Activated CD4-positive, alpha-beta T cell treated with anti-CD3 and anti-CD28 coated beads for 36 hours (primary cell): ENCODE measurements at regions of chr6 and their contacts with region 1.

Region 1: DNA sequence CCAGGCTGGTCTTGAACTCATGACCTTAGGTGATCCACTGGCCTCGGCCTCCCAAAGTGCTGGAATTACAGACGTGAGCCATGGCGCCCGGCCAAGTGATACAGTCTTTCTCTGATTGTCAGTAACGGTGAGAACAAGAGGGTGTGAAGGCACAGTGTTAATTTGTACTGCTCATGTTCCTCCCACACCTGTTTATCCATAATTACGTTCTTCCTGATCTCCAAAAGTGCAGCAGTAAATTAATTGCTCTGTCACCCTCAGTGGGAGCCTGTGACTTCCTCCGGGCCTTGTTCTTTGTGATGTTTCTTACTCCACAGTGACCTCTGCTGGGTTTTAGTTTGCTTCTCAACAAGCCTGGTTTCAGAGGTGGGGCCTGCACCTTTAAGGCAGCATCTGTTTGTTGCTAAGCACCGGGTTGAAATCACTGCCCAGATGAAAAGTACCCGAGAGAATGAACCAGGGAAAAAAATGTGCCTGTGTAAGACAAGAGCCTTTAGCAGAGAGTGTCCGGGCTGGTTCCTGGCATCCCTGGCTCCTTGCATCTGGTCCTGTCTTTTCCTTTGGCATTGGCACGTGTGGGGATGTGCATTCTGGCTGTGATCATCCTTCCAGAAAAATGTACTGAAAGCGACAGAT is 89.1 kb upstream of the CLDN20 start:
- DNase-seq: peak; percentile 77
- ATAC-seq: peak; percentile 58
- H3K4me3 Mint-ChIP-seq: no peak overlapping the region
- H3K27ac Mint-ChIP-seq: peak overlapping the region; percentile 73
- H3K4me1 Mint-ChIP-seq: peaks cover 50% of the 10 kb centered on the region
- H3K27me3 Mint-ChIP-seq: no peaks in the 10 kb centered on the region

Region 2: GRCh38 chr6:154675602-154676088 is 499.0 kb before region 1 on chr6:
- CTCF ChIA-PET with region 1: interaction called, 4 read pairs
- POLR2A ChIA-PET with region 1: no interaction called
- intact Hi-C with region 1: loop called (anchors 1 kb)
- DNase-seq: peak; percentile 91
- ATAC-seq: peak; percentile 100
- H3K4me3 Mint-ChIP-seq: no peak overlapping the region
- H3K27ac Mint-ChIP-seq: no peak overlapping the region
- H3K4me1 Mint-ChIP-seq: no peaks in the 10 kb centered on the region
- H3K27me3 Mint-ChIP-seq: no peaks in the 10 kb centered on the region

Region 3: DNA sequence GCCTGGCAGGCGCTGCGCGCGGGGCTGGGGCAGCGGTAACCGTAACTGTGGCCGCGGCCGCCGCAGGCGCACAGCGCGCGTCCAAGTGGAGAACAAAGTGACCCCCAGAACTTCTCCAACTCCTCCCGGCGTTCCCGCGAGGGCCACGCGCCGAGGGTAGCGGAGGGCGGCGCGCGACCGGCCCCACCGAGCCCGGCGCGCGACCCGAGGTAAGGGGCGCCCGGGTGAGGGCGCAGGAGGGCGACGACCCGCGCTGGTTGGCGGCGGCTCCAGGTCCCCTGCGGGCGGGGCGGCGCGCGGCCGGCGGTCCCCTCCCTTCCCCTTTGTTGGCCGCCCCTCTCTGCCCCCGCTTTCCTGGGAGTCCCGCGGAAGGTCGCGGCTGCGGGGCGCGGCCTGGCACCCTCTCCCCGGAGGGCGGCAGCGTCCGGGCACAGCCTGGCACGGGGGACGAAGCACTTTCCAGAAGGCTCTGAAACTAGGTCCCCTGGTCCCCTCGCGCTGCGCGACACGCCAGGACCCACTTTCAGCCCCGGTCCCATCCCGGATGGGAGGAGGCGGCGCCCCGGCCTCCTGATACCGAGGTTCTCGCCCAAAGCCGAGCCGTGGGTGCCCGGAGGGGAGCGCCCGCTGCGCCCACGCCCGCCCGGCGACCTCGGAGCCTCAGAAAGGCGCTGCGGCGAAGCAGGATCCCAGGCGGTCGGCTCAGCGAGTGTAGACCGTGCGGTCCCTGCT is 179.2 kb before region 1 on chr6 and contains the start of gene TIAM2:
- CTCF ChIA-PET with region 1: no interaction called
- POLR2A ChIA-PET with region 1: no interaction called
- intact Hi-C with region 1: loop called (anchors 1 kb)
- DNase-seq: peak; percentile 59
- ATAC-seq: peak; percentile 71
- H3K4me3 Mint-ChIP-seq: peak within 1 kb of the TSS; percentile 65
- H3K27ac Mint-ChIP-seq: no peak within 1 kb of the TSS
- H3K4me1 Mint-ChIP-seq: peaks cover 11% of the 10 kb centered on the region
- H3K27me3 Mint-ChIP-seq: peaks cover 36% of the 10 kb centered on the region
- total RNA-seq, gene TIAM2: 10.4 to 12.0 TPM

Region 4: GRCh38 chr6:155154158-155154830 is 20.4 kb before region 1 on chr6:
- CTCF ChIA-PET with region 1: interaction called, 26 read pairs
- POLR2A ChIA-PET with region 1: interaction called, 32 read pairs
- intact Hi-C with region 1: loop called (anchors 1 kb)
- DNase-seq: peak; percentile 62
- ATAC-seq: peak; percentile 61
- H3K4me3 Mint-ChIP-seq: peak overlapping the region; percentile 35
- H3K27ac Mint-ChIP-seq: peak overlapping the region; percentile 91
- H3K4me1 Mint-ChIP-seq: peaks cover 78% of the 10 kb centered on the region
- H3K27me3 Mint-ChIP-seq: peaks cover 3% of the 10 kb centered on the region

Region 5: GRCh38 chr6:155264693-155265320 is 90.1 kb after region 1 on chr6:
- CTCF ChIA-PET with region 1: interaction called, 11 read pairs
- POLR2A ChIA-PET with region 1: no interaction called
- intact Hi-C with region 1: loop called (anchors 1 to 5 kb)
- DNase-seq: no peak
- ATAC-seq: peak; percentile 19
- H3K4me3 Mint-ChIP-seq: no peak overlapping the region
- H3K27ac Mint-ChIP-seq: peak overlapping the region; percentile 15
- H3K4me1 Mint-ChIP-seq: peaks cover 22% of the 10 kb centered on the region
- H3K27me3 Mint-ChIP-seq: no peaks in the 10 kb centered on the region

Region 6: GRCh38 chr6:155530219-155530834 is 355.6 kb after region 1 on chr6:
- CTCF ChIA-PET with region 1: no interaction called
- POLR2A ChIA-PET with region 1: no interaction called
- intact Hi-C with region 1: loop called in 1 of 2 experiments (anchors 5 kb)
- DNase-seq: peak; percentile 29
- ATAC-seq: peak; percentile 73
- H3K4me3 Mint-ChIP-seq: no peak overlapping the region
- H3K27ac Mint-ChIP-seq: no peak overlapping the region
- H3K4me1 Mint-ChIP-seq: peaks cover 16% of the 10 kb centered on the region
- H3K27me3 Mint-ChIP-seq: no peaks in the 10 kb centered on the region

Region 7: DNA sequence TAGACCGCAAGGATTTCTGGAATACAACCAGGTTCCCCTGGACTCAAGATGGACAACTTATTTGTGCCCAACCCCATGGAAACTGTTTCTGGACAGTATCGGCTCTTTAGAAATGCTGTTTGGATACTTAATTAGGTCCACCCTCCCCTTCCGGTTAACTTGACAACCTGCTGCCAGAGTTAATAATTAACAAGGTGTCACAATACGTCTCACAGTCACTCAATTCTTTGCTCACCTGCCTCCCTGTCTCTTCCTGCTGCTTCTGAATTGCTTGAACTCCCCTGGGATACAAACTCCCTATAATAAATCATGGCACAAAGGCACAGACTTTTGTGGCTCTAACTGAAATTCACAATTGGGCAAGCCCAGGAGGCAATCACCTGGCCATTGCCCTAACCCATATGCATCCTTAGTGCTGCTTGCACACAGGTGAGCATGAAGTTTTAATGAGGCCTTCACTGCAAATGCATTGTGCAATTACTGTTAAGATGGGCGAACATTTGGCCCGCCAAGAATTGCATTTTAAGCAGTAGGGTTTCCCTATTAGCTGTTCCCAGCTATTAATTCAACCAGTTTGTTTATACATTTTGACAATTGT is 785.3 kb after region 1 on chr6:
- CTCF ChIA-PET with region 1: no interaction called
- POLR2A ChIA-PET with region 1: no interaction called
- intact Hi-C with region 1: no loop called
- DNase-seq: no peak
- ATAC-seq: no peak
- H3K4me3 Mint-ChIP-seq: no peak overlapping the region
- H3K27ac Mint-ChIP-seq: no peak overlapping the region
- H3K4me1 Mint-ChIP-seq: no peaks in the 10 kb centered on the region
- H3K27me3 Mint-ChIP-seq: no peaks in the 10 kb centered on the region